ENCODE measurements at regions of chr19 and their contacts with region 1.

Region 1: GRCh38 chr19:1767464-1767933 is 14.2 kb downstream of the ONECUT3 start:
- DNase-seq: peak; percentile 74
- ATAC-seq: peak; percentile 67

Region 2: DNA sequence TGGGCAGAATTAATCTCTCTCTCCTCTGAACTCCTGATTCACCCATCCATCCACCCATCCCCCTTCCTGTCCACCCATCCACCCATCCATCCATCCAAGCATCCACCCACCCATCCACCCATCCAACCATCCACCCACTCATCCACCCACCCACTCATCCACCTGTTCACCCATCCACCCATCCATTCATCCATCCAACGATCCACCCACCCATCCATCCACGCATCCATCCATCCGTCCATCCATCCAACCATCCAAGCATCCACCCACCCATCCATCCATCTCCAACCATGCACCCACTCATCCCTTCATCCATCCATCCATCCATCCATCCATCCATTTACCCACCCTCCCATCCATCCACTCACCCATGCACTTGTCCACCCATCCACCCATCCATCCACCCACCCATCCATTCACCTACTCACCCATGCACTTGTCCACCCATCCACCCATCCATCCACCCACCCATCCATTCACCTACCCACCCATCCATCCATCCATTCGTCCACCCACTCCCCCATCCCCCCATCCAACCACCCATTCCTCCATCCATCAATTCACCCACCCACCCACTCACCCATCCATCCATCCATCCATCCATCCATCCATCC is 218.1 kb before region 1 on chr19:
- intact Hi-C with region 1: loop called (anchors 5 kb)
- DNase-seq: no peak
- ATAC-seq: no peak

Region 3: GRCh38 chr19:1799695-1800342 is 32.3 kb after region 1 on chr19:
- intact Hi-C with region 1: loop called (anchors 1 kb)
- DNase-seq: no peak
- ATAC-seq: no peak